ENCODE measurements at regions of chr4 and their contacts with region 1.

Region 1: GRCh38 chr4:105715692-105716278 is 7.2 kb downstream of the GSTCD start:
- DNase-seq: no peak
- H3K4me3 Mint-ChIP-seq: no peak overlapping the region
- H3K27ac Mint-ChIP-seq: no peak overlapping the region
- H3K4me1 Mint-ChIP-seq: no peaks in the 10 kb centered on the region
- H3K27me3 Mint-ChIP-seq: no peaks in the 10 kb centered on the region

Region 2: GRCh38 chr4:105140684-105141490 is 574.9 kb before region 1 on chr4:
- intact Hi-C with region 1: loop called (anchors 1 kb)
- DNase-seq: no peak
- H3K4me3 Mint-ChIP-seq: no peak overlapping the region
- H3K27ac Mint-ChIP-seq: no peak overlapping the region
- H3K4me1 Mint-ChIP-seq: peaks cover 21% of the 10 kb centered on the region
- H3K27me3 Mint-ChIP-seq: no peaks in the 10 kb centered on the region

Region 3: GRCh38 chr4:105520817-105521790 is 194.7 kb before region 1 on chr4:
- intact Hi-C with region 1: loop called (anchors 1 kb)
- DNase-seq: no peak
- H3K4me3 Mint-ChIP-seq: no peak overlapping the region
- H3K27ac Mint-ChIP-seq: no peak overlapping the region
- H3K4me1 Mint-ChIP-seq: no peaks in the 10 kb centered on the region
- H3K27me3 Mint-ChIP-seq: peaks cover 7% of the 10 kb centered on the region

Region 4: GRCh38 chr4:105780176-105780575 is 64.4 kb after region 1 on chr4:
- intact Hi-C with region 1: no loop called
- DNase-seq: no peak
- H3K4me3 Mint-ChIP-seq: no peak overlapping the region
- H3K27ac Mint-ChIP-seq: no peak overlapping the region
- H3K4me1 Mint-ChIP-seq: no peaks in the 10 kb centered on the region
- H3K27me3 Mint-ChIP-seq: no peaks in the 10 kb centered on the region

Measured in activated T-helper 1 cell treated with anti-CD3 and anti-CD28 coated beads, Interleukin-12 subunit alpha, Interleukin-12 subunit beta, Interleukin-2, Interleukin-4 antibody, amounts not matched to agents 30 ng/mL and 10 ng/mL and 1 ng/mL, durations not matched to agents 14 hours and 24 hours and 36 hours (primary cell).